ENCODE measurements at regions of chr4 and their contacts with region 1.

Region 1: GRCh38 chr4:101347557-101348366 is 436 bp upstream of the PPP3CA start:
- DNase-seq: peak; percentile 87
- ATAC-seq: peak; percentile 81
- H3K4me3 ChIP-seq: peak overlapping the region; percentile 95 to 98 (median 96)
- H3K27ac ChIP-seq: peak overlapping the region; percentile 87
- H3K4me1 ChIP-seq: peaks cover 38% of the 10 kb centered on the region
- H3K27me3 ChIP-seq: no peaks in the 10 kb centered on the region; a peak in 1 of 5 replicates
- CTCF ChIP-seq: peak; percentile 32; the same call in 1 of the 2 replicates
- EP300 ChIP-seq: no peak
- POLR2A ChIP-seq: peak in 1 of 2 experiments; percentile 59; a peak in 2 of 4 replicates
- RAD21 ChIP-seq: 0 out of 2 replicates have a peak, but pooled peaks have one; percentile 11

Region 2: GRCh38 chr4:101114936-101115372 is 232.8 kb before region 1 on chr4:
- CTCF ChIA-PET with region 1: no interaction called
- POLR2A ChIA-PET with region 1: interaction called, 8 read pairs
- in situ Hi-C with region 1: no loop called
- intact Hi-C with region 1: loop called (anchors 1 kb)
- DNase-seq: peak; percentile 99
- ATAC-seq: peak; percentile 100
- H3K4me3 ChIP-seq: no peak overlapping the region; a peak in 1 of 6 replicates
- H3K27ac ChIP-seq: peak overlapping the region; percentile 86
- H3K4me1 ChIP-seq: peaks cover 38% of the 10 kb centered on the region
- H3K27me3 ChIP-seq: no peaks in the 10 kb centered on the region
- CTCF ChIP-seq: no peak
- EP300 ChIP-seq: peak; percentile 59 to 92; a peak in 3 of 4 replicates
- POLR2A ChIP-seq: no peak
- RAD21 ChIP-seq: no peak

Region 3: DNA sequence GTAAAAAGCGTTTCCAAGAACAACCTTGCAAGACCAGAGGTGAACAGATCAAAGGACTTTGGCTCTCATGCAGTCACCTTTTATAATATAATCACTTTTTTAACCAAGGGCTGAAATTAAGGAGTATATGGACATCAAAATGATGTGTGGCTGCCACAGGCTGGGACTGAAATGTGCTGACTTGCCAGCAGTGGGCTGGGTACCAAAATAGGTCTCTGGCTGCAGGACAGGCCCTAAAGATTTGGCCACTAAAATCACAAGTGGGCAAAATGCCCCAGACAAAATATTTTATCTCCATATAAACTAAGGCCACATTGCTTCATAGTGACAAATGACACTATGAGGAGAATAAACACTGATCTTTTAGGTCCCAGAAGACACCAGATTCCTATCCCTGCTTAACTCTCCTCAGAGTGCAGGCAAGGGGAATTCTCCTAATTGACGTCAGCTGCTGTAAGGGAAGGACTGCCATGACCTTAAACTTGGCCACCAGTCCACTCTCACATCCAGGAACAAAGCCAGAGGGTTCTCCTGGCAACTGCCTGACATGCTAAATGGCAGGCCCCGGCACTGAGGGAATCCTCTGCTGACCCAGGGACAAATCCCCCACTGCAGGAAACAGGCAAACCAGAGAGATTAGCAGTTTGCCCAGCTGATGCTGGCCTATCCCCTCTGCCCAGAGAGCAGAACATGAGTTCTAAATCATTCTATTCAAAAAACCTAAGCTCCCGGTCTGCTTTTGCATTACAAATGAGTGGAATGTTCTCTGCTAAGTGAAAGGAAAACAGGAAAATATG is 156.3 kb before region 1 on chr4:
- CTCF ChIA-PET with region 1: no interaction called
- POLR2A ChIA-PET with region 1: interaction called, 3 read pairs
- in situ Hi-C with region 1: loop called (anchors 10 kb)
- intact Hi-C with region 1: loop called (anchors 5 kb)
- DNase-seq: no peak
- ATAC-seq: peak; percentile 68
- H3K4me3 ChIP-seq: no peak overlapping the region
- H3K27ac ChIP-seq: peak overlapping the region; percentile 11
- H3K4me1 ChIP-seq: peaks cover 45% of the 10 kb centered on the region
- H3K27me3 ChIP-seq: no peaks in the 10 kb centered on the region
- CTCF ChIP-seq: no peak
- EP300 ChIP-seq: no peak
- POLR2A ChIP-seq: no peak
- RAD21 ChIP-seq: no peak

Region 4: DNA sequence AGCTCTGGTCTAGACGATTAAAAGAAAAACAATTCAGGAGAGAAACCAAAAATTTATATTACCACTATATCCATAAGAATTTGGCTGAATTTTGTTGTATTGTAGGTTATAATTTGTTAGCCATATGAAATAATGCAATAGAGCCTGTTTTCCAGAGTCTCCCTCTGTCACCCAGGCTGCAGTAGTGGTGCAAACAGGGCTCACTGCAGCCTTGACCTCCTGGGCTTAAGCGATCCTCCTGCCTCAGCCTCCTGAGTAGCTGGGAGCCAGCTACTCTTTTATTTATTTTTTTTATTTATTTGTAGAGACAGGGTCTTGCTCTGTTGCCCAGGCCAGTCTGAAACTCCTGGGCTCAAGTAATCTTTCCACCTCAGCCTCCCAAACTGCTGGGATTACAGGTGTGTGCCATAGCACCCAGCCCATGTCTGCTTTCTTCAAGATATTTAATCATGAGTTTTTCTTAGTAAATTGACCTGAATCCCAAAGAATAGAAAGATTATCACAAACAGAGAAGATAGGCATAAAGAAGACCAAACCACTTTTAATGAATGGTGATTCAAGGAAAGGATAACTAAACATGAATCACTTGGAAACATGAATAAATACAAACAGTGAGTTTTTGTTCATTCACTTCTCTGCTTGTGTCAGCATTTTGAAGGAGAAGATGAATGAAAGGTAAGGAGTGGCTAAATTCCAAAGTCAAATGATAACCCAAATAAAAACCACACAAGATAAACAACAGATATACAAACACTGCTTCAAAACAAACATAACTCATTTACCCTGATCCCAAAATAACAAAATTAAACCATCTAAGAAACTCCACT is 82.6 kb before region 1 on chr4:
- CTCF ChIA-PET with region 1: no interaction called
- POLR2A ChIA-PET with region 1: no interaction called
- in situ Hi-C with region 1: no loop called
- intact Hi-C with region 1: loop called (anchors 2 kb)
- DNase-seq: no peak
- ATAC-seq: peak; percentile 58
- H3K4me3 ChIP-seq: no peak overlapping the region
- H3K27ac ChIP-seq: peak overlapping the region; percentile 31
- H3K4me1 ChIP-seq: peaks cover 44% of the 10 kb centered on the region
- H3K27me3 ChIP-seq: no peaks in the 10 kb centered on the region
- CTCF ChIP-seq: no peak
- EP300 ChIP-seq: no peak
- POLR2A ChIP-seq: no peak
- RAD21 ChIP-seq: no peak

Region 5: DNA sequence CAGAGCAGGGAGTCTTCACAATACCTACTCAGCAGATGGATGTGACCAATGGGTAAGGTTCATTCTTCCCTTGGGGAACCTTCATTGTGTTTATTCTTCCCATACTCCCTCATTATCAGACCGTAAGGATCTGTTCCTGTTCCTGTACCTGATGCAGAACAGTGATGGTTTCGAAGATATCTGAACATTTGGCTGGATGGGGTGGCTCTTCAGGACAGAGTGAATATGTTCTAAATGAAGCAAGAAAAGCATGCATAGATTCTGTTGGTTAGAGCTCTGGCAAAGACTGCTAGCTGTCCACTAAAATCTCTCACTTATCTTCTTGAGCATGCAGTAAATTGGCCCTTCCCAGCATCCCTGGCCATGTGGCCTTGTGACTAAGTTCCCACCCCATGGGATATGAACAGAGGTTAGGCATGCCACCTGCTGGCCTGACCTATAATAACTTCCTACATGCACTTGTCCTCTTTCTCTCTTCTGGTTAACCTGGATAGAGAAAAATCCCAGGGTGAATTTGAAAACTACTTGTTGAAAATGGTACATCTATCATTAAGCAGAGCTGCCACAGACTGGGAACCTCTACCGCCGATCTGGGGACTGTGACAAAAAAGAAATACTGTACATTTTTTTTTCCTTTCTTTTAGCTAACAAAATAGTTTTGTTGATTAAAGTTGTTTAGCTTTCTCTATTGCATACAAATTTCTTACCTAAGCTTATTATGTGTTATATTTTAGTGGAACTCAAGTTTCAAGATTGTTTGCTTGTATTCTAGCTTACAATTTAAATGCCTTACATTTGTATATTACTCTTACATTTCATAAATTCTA is 382.7 kb after region 1 on chr4:
- CTCF ChIA-PET with region 1: no interaction called
- POLR2A ChIA-PET with region 1: no interaction called
- in situ Hi-C with region 1: no loop called
- intact Hi-C with region 1: loop called (anchors 5 kb)
- DNase-seq: peak; percentile 54
- ATAC-seq: peak; percentile 99
- H3K4me3 ChIP-seq: no peak overlapping the region
- H3K27ac ChIP-seq: no peak overlapping the region
- H3K4me1 ChIP-seq: no peaks in the 10 kb centered on the region
- H3K27me3 ChIP-seq: no peaks in the 10 kb centered on the region
- CTCF ChIP-seq: peak; percentile 85
- EP300 ChIP-seq: no peak
- POLR2A ChIP-seq: no peak
- RAD21 ChIP-seq: peak; percentile 73

Measured in HepG2 (cell line).